Activated CD4-positive, alpha-beta memory T cell treated with anti-CD3 and anti-CD28 coated beads, Interleukin-2, amount 10 ng/mL, durations not matched to agents 7 days and 5 days (primary cell): ENCODE measurements at regions of chr1 and their contacts with region 1.

Region 1: DNA sequence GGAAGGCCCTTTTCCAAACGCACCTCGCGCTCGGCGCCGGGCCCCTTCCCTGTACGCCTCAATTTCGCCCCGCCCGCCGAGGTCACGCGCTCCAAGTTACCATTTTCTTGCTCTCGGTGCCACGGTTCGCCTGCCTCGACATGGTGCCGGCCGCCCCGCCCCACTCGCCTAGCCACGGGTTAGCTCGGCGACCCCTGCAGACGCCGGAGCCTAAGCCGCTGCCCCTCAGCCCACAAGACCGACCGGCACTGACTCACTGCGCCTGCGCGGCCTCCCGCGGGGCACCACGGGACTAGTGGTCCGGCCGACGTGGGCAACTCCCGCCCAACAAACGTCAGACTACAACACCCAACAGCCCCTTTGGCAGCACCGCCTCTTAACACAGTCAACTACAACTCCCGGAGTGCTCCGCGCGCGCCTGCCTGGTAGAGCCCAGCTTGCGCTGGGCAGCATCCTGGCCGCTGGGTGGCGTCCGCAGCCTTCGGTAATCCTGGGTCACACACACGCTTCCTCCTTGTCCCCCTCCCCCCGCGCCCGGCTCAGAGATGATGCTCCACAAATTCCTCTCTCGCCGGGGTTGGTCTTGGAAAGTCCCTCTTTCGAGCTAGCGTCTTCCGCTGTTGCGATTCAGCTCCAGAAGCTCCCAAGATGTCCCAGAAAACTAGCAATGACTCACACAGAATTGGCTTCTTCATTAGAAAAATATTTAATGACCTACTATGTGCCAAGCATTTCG is at the start of gene TRAPPC3:
- DNase-seq: peak; percentile 100
- H3K4me3 Mint-ChIP-seq: peak within 1 kb of the TSS; percentile 98
- H3K27ac Mint-ChIP-seq: peak within 1 kb of the TSS; percentile 93
- H3K4me1 Mint-ChIP-seq: peaks cover 66% of the 10 kb centered on the region
- H3K27me3 Mint-ChIP-seq: no peaks in the 10 kb centered on the region
- total RNA-seq, gene TRAPPC3: 57.2 to 58.4 TPM

Region 2: DNA sequence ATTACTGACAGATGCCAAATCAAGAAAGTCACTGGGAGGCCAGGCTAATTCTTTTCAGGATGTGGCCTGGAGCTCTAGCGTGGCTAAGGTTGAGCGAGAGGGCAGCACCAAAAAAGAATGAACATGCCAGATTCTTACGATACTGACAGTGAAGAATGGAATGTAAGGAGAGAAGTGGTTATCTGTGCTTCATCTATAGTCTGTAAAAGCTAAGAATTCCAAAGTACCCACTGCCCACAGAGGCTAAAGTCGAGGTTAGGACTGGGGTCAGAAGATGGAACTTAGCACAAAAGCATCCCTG is 543.6 kb before region 1 on chr1:
- CTCF ChIA-PET with region 1: no interaction called
- POLR2A ChIA-PET with region 1: no interaction called
- DNase-seq: no peak
- H3K4me3 Mint-ChIP-seq: no peak overlapping the region
- H3K27ac Mint-ChIP-seq: no peak overlapping the region
- H3K4me1 Mint-ChIP-seq: peaks cover 7% of the 10 kb centered on the region
- H3K27me3 Mint-ChIP-seq: no peaks in the 10 kb centered on the region

Region 3: DNA sequence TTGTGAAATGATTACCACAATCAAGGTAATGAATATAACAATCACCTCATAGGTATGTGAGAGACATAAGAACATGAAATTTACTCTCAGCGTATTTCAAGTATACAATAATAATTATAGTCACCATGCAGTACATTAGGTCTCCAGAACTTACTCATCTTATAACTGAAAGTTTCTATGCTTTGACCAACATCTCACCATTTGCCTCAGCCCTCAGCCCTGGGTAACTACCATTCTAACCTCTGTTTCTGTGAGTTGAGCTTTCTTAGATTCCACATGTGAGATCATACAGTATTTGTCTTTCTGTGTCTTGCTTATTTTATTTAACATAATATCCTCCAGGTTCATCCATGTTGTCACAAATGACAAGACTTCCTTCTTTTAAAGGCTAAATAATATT is 161.2 kb before region 1 on chr1:
- CTCF ChIA-PET with region 1: no interaction called
- POLR2A ChIA-PET with region 1: no interaction called
- DNase-seq: no peak
- H3K4me3 Mint-ChIP-seq: no peak overlapping the region
- H3K27ac Mint-ChIP-seq: no peak overlapping the region
- H3K4me1 Mint-ChIP-seq: no peaks in the 10 kb centered on the region
- H3K27me3 Mint-ChIP-seq: no peaks in the 10 kb centered on the region

Region 4: DNA sequence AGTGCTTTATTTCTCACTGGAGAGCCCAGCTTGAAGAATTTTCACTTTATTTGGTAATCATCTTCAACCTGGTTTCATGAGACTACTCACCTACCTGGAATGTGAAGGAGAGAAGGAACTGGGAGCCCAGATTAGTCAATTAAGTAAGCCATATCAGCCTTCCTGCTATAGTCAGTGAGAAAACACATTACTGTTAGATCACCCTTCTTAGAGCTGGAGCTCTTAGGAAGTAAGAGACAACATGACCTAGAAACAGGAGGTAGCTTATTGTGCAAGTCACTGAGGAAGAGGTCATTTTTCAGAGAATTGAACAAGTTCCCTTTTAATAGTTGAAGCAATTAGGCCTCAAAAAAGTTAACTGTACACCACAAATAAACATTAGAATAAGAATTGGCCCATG is 114.7 kb before region 1 on chr1:
- CTCF ChIA-PET with region 1: no interaction called
- POLR2A ChIA-PET with region 1: no interaction called
- DNase-seq: no peak
- H3K4me3 Mint-ChIP-seq: no peak overlapping the region
- H3K27ac Mint-ChIP-seq: peak overlapping the region; percentile 18
- H3K4me1 Mint-ChIP-seq: peaks cover 5% of the 10 kb centered on the region
- H3K27me3 Mint-ChIP-seq: no peaks in the 10 kb centered on the region

Region 5: GRCh38 chr1:36160949-36161485 is 11.6 kb after region 1 on chr1:
- CTCF ChIA-PET with region 1: interaction called, 105 read pairs
- POLR2A ChIA-PET with region 1: interaction called, 193 read pairs
- DNase-seq: peak; percentile 84
- H3K4me3 Mint-ChIP-seq: peak overlapping the region; percentile 74
- H3K27ac Mint-ChIP-seq: peak overlapping the region; percentile 88
- H3K4me1 Mint-ChIP-seq: peaks cover 67% of the 10 kb centered on the region
- H3K27me3 Mint-ChIP-seq: no peaks in the 10 kb centered on the region

Region 6: DNA sequence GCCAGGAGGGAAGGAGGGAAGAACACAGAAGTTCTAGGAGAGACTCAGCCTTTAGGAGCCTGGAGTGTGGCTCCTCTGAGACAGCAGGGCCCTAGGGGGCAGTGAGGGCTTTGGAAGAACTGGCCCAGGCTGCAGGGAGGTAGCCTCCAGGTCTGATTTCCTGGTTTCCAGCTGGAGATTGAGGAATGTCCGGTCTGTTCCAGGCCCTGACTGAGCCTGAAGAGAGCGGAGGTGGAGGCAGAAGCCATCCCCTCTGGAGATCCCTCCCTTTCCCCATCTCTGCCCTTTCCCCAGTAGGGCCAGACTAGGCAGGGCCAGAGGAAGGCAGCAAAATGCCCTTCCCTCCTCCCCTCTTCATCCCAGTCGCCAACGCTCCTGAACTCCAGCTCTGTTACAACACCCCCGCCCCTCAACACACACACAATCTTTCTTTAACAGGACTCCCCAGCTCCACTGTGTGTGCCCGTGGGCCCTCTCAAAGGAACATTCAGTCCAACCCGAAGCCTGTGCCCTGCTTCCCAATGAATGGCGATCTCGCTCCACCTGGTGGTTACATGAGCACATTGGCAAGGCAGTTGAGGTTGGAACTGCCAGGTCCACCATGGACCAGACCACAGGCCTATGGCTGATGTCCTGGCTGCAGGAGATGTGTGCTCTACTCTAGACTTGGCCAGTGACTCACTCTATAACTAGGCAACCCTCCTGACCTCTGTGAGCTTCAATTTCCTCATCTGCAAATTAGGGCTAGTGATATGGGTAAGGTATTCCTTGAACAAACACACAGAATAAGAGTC is 38.6 kb after region 1 on chr1:
- CTCF ChIA-PET with region 1: interaction called, 123 read pairs
- POLR2A ChIA-PET with region 1: interaction called, 35 read pairs
- DNase-seq: peak; percentile 84
- H3K4me3 Mint-ChIP-seq: no peak overlapping the region
- H3K27ac Mint-ChIP-seq: peak overlapping the region; percentile 38
- H3K4me1 Mint-ChIP-seq: peaks cover 8% of the 10 kb centered on the region
- H3K27me3 Mint-ChIP-seq: no peaks in the 10 kb centered on the region

Region 7: DNA sequence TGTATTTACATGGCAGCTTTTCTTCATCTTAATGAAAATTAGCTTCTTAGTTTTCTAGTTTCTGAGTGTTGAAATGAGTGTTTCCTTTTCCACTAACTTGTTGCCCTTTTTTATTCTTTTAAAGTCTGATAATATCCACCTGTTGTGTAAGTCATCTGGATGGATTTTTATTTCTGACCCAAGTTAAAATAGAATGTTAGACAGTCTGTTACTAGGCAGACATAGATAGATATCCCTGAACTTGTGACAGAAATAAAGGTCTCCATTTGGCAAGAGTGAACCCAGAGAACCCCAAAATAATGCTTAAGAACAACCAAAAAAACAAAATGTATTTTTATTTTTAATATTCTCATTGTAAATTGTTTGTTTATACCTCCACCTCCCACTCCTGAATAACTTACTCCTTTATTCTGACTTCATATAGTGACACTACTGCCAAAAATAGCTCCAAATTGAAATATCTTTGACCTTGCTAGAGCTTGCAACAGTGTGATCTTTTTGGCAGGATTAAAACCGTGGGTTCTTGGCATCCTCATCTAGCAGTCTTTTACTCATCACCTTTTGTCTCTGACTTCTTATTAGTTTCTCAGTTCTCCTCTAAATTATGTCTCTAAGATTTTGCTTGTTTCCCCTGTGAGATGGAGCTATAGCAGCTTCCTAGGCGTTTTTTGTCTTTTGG is 129.8 kb after region 1 on chr1:
- CTCF ChIA-PET with region 1: interaction called, 40 read pairs
- POLR2A ChIA-PET with region 1: interaction called, 6 read pairs
- DNase-seq: no peak
- H3K4me3 Mint-ChIP-seq: no peak overlapping the region
- H3K27ac Mint-ChIP-seq: no peak overlapping the region
- H3K4me1 Mint-ChIP-seq: peaks cover 24% of the 10 kb centered on the region
- H3K27me3 Mint-ChIP-seq: no peaks in the 10 kb centered on the region

Region 8: GRCh38 chr1:36300526-36300925 is 151.1 kb after region 1 on chr1:
- CTCF ChIA-PET with region 1: interaction called, 14 read pairs
- POLR2A ChIA-PET with region 1: interaction called, 3 read pairs
- DNase-seq: no peak
- H3K4me3 Mint-ChIP-seq: no peak overlapping the region
- H3K27ac Mint-ChIP-seq: peak overlapping the region; percentile 6
- H3K4me1 Mint-ChIP-seq: peaks cover 21% of the 10 kb centered on the region
- H3K27me3 Mint-ChIP-seq: no peaks in the 10 kb centered on the region

Region 9: GRCh38 chr1:36385410-36386257 is 236.2 kb after region 1 on chr1 and contains the start of gene STK40:
- CTCF ChIA-PET with region 1: interaction called, 11 read pairs
- POLR2A ChIA-PET with region 1: interaction called, 10 read pairs
- DNase-seq: peak; percentile 99
- H3K4me3 Mint-ChIP-seq: peak within 1 kb of the TSS; percentile 87
- H3K27ac Mint-ChIP-seq: peak within 1 kb of the TSS; percentile 100
- H3K4me1 Mint-ChIP-seq: peaks cover 61% of the 10 kb centered on the region
- H3K27me3 Mint-ChIP-seq: no peaks in the 10 kb centered on the region
- total RNA-seq, gene STK40: 75.2 to 76.8 TPM